Dorsolateral prefrontal cortex (tissue), 120 donors: ENCODE measurements at regions of chr4 and their contacts with region 1.

Region 1: GRCh38 chr4:108570993-108571569 is 49.3 kb upstream of the RPL34 start:
- DNase-seq: no peak
- H3K4me3 ChIP-seq: no peak overlapping the region
- H3K27ac ChIP-seq: no peak overlapping the region
- H3K27me3 ChIP-seq: no peaks in the 10 kb centered on the region
- CTCF ChIP-seq: no peak

Region 2: DNA sequence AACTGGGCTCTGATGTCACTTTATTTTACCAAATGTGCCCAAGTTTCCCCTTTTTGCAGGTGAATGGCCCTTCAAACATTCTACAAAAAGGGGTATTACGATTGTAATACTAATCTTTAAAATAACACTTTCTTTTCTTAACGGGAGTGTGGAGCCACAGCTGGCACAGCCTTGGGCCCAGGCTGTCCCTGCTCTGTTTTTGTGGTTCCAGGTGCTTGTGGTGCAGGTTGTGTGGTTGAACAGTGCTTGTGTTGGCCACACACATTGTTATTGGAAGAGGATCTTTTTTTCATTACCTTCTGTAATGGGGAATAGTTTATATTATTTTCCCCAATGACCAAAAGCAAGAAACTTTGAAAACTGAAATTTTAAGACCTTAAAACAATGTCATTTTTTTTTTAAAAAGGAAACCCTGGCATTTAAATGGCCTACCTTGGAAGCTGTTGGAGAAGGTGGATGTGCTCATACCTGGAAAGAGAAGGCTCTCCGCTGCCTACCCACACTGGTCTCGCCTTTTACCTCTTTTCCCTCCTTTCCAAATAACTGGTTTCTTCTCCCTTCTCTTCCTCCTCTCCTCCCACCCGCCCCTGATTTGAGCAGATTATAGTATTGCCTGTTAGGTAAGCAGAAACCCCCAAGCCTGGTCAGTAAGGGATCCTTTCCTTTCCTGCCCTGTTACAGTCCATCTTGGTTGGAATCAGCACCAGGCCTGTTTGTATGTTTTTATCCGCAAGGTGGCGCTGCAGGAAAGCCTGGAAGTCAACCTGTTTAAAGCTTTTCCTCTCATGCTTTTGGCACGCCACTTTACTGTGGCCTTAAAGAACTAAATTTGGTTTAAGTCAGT is 552.8 kb before region 1 on chr4:
- intact Hi-C with region 1: loop called in 1 of 2 experiments (anchors 10 kb)
- DNase-seq: peak; percentile 69 to 93 (median 80)
- H3K4me3 ChIP-seq: no peak overlapping the region
- H3K27ac ChIP-seq: no peak overlapping the region
- H3K27me3 ChIP-seq: no peaks in the 10 kb centered on the region
- CTCF ChIP-seq: peak; percentile 69 to 93 (median 86)

Region 3: GRCh38 chr4:108030332-108030731 is 540.7 kb before region 1 on chr4:
- intact Hi-C with region 1: loop called in 1 of 2 experiments (anchors 5 kb)
- DNase-seq: peak in 2 of 10 donors; percentile 51 to 53
- H3K4me3 ChIP-seq: no peak overlapping the region
- H3K27ac ChIP-seq: no peak overlapping the region
- H3K27me3 ChIP-seq: no peaks in the 10 kb centered on the region
- CTCF ChIP-seq: peak in 53 of 56 donors; percentile 18 to 74 (median 48)